Thyroid gland (tissue), 4 donors: ENCODE measurements at regions of chr21 and their contacts with region 1.

Region 1: DNA sequence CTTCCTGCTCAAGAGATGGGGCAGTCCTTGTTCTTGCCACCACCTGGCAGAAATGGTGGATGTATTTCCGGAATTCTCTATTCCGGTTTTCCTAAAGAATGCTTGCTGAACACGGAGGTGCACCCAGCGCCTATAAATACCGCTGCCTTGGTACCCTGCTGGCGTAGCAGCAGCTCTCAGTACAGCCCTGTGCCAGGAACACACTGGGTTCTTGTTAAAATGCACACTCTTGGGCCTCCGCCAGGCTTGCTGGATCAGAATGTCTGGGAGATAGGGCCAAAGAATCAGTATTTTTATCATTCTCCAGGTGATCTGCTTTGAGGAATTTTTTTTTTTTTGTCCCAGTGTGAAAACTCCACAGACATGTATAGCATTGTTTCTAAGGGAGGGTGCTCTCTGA is 54.2 kb downstream of the IGSF5 start:
- DNase-seq: peak in 1 of 2 donors; percentile 10
- H3K4me3 ChIP-seq: no peak overlapping the region
- H3K27ac ChIP-seq: no peak overlapping the region
- H3K4me1 ChIP-seq: no peaks in the 10 kb centered on the region
- H3K27me3 ChIP-seq: no peaks in the 10 kb centered on the region
- CTCF ChIP-seq: no peak
- POLR2A ChIP-seq: no peak

Region 2: DNA sequence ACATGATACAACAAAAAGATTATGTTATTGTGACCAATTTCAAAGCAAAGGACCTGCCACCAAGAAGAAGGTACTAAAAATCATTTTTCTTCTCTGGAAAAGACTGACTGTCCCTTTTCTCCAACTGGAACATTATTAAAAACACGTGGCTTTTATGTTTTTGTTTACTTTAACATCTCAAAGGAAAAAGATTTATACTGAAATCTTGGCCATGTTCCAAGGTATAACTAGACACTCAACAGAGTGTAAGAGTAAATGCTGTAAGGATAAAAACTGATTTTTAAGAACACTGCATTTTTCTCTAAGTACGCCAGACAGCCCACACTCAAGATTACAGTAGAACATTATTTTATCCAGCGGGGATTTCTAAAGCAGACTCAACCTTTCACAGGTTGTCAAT is 547.9 kb before region 1 on chr21:
- intact Hi-C with region 1: no loop called
- DNase-seq: no peak
- H3K4me3 ChIP-seq: no peak overlapping the region
- H3K27ac ChIP-seq: no peak overlapping the region
- H3K4me1 ChIP-seq: peaks cover 8 to 9% of the 10 kb centered on the region in 2 donors
- H3K27me3 ChIP-seq: no peaks in the 10 kb centered on the region
- CTCF ChIP-seq: no peak
- POLR2A ChIP-seq: no peak

Region 3: DNA sequence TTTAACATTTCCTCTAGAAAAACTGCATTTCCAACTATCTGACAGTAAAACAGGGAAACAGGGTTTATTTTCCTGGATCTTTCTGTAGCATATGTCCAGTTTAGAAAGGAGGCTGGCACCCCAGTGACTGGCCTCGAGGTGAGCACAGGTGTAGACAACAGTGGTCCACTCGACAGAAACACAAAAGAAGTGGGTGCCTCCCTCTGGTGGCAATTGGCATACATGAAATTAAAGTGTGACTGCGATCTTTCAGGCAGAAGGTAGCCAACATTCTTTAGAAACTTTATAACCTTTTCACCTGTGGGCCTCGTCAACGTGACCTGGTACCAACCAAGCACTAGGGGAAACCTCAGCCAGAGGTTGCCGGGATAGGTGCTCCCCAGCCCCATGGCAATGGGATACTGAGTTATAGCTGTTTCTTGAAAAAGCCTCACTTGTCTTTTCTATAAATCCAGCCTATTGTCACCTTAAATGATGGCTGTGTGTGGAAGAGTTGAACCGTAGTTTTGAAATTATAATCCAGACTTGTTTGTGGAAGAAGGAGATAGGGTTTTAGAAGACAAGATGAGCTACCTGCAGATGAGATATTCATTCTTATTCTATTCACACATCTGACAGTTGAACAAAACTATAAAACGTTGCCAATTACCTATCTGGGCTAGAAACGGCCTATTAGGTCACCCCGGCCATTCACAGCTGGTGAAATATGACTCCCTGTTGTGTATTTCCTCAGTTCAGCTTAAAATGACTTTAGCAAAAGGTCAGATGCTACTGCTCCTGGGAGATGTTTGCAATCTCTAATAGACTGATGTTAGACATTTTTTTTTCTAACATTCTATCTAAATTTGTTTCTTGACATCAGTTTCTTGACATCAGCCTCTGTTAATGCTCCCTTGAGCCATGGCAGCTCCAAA is 112.4 kb after region 1 on chr21:
- intact Hi-C with region 1: loop called (anchors 10 kb)
- DNase-seq: peak; percentile 59 to 67
- H3K4me3 ChIP-seq: no peak overlapping the region
- H3K27ac ChIP-seq: peak overlapping the region in 1 of 3 donors; percentile 50
- H3K4me1 ChIP-seq: peaks cover 5 to 21% of the 10 kb centered on the region in 2 donors
- H3K27me3 ChIP-seq: no peaks in the 10 kb centered on the region
- CTCF ChIP-seq: peak in 4 of 6 experiments; percentile 59 to 74 (median 67)
- POLR2A ChIP-seq: no peak

Region 4: DNA sequence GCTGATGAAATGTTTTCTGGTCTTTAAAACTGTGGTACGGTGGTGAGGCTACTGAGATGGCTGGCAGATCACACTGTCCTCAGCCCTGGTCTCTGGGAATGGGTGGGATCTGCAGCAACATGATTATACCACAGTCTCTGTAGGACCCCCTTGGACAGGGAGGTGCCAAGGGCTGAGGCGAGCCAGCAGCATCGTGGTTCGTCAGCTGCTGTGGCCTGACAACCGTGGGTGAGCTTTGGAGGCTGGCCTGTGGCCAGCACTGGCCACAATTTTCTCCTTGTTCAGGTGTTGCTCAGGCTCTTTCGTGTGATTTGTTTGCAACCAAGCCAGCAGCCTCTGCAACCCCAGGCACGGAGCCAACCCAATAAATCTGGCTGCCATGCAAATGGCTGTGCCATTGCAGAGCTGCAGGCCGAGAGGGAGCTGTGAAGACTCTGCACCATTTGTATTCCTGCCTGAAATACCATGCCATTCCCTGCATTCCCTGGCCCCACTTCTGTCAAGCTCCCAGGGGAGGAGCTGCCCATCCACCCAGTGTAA is 139.0 kb after region 1 on chr21:
- intact Hi-C with region 1: no loop called
- DNase-seq: peak; percentile 19 to 51
- H3K4me3 ChIP-seq: no peak overlapping the region
- H3K27ac ChIP-seq: no peak overlapping the region
- H3K4me1 ChIP-seq: no peaks in the 10 kb centered on the region
- H3K27me3 ChIP-seq: no peaks in the 10 kb centered on the region
- CTCF ChIP-seq: no peak
- POLR2A ChIP-seq: no peak

Region 5: GRCh38 chr21:40049394-40050290 is 250.5 kb after region 1 on chr21:
- intact Hi-C with region 1: loop called (anchors 10 kb)
- DNase-seq: peak; percentile 27 to 37
- H3K4me3 ChIP-seq: no peak overlapping the region
- H3K27ac ChIP-seq: no peak overlapping the region
- H3K4me1 ChIP-seq: peaks cover 47 to 48% of the 10 kb centered on the region in 2 donors
- H3K27me3 ChIP-seq: no peaks in the 10 kb centered on the region
- CTCF ChIP-seq: no peak
- POLR2A ChIP-seq: no peak

Region 6: GRCh38 chr21:40120940-40121575 is 321.9 kb after region 1 on chr21:
- intact Hi-C with region 1: loop called (anchors 10 kb)
- DNase-seq: peak in 1 of 2 donors; percentile 21
- H3K4me3 ChIP-seq: no peak overlapping the region
- H3K27ac ChIP-seq: no peak overlapping the region
- H3K4me1 ChIP-seq: no peaks in the 10 kb centered on the region
- H3K27me3 ChIP-seq: no peaks in the 10 kb centered on the region
- CTCF ChIP-seq: peak; percentile 59 to 100 (median 92)
- POLR2A ChIP-seq: no peak